Activated B cell treated with CpG ODN at 0.5 μM for 24 hours (primary cell): ENCODE measurements at regions of chr7 and their contacts with region 1.

Region 1: GRCh38 chr7:142782922-142783900 is 12.4 kb downstream of the PRSS2 start:
- DNase-seq: peak; percentile 71
- ATAC-seq: peak; percentile 91
- H3K4me3 Mint-ChIP-seq: peak overlapping the region; percentile 86
- H3K27ac Mint-ChIP-seq: peak overlapping the region; percentile 91
- H3K4me1 Mint-ChIP-seq: peaks cover 34% of the 10 kb centered on the region
- H3K27me3 Mint-ChIP-seq: no peaks in the 10 kb centered on the region
- CTCF ChIP-seq: peak; percentile 27

Region 2: DNA sequence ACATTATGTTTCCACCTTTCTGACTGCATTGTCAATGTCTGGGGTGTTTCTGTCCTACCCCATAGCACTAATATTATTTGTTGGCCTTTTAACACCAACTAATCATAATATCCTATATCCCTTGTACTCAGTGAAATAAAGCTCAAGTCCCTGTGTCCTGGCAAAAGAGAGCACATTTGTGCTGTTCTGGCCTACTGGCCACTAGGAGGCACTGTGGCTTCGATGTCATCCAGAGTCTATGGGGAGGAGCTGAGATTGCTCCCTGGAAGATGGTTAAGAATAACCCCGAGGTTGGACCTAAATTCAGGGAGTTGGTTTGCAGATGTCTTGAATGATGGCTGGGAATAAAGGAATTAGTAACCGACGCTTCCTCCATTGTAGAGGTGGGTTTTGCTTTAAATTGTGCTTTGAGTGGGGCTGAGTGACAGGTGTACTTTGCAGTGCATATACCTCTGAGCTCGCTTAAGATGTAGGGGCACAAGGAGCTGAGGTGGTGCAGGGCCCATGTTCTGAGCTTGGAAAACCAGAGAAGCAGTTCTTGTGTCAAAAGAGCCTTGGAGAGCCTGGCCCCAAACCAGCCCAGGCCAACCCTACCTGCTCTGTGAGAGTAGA is 225.1 kb before region 1 on chr7:
- CTCF ChIA-PET with region 1: no interaction called
- POLR2A ChIA-PET with region 1: no interaction called
- intact Hi-C with region 1: no loop called
- DNase-seq: no peak
- ATAC-seq: peak; percentile 42
- H3K4me3 Mint-ChIP-seq: no peak overlapping the region
- H3K27ac Mint-ChIP-seq: no peak overlapping the region
- H3K4me1 Mint-ChIP-seq: no peaks in the 10 kb centered on the region
- H3K27me3 Mint-ChIP-seq: peaks cover 58% of the 10 kb centered on the region
- CTCF ChIP-seq: peak; percentile 48

Region 3: GRCh38 chr7:142626420-142627035 is 156.7 kb before region 1 on chr7:
- CTCF ChIA-PET with region 1: interaction called, 95 read pairs
- POLR2A ChIA-PET with region 1: interaction called, 4 read pairs
- intact Hi-C with region 1: no loop called
- DNase-seq: no peak
- ATAC-seq: peak; percentile 62
- H3K4me3 Mint-ChIP-seq: no peak overlapping the region
- H3K27ac Mint-ChIP-seq: no peak overlapping the region
- H3K4me1 Mint-ChIP-seq: peaks cover 3% of the 10 kb centered on the region
- H3K27me3 Mint-ChIP-seq: peaks cover 24% of the 10 kb centered on the region
- CTCF ChIP-seq: no peak

Region 4: DNA sequence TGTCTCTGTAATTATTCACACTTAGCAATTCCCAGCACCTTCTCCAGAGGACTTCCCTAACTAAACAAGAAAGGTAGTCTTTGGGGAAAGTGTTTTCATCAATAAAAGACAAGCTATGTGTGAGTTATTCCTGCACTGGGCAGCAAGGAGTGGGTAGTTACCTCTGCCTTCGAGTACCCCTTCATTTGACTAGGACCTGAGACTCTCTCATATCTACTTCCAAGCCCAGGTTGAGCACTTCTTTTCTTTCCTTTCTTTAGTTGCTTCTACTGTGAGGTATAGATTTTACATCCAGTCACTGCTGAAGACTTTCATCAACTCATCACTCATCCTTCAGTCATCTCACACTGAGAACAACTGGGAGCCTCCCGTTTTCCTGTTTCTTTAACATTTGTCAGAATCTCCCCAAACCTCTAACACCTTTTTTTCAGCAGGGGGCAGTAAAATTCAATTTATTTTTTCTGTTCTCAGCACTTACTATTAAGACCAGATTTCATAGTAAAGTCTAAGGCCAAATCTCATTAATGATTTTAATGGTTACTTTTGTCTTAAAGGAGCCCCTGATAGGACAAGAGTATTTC is 114.0 kb before region 1 on chr7:
- CTCF ChIA-PET with region 1: interaction called, 14 read pairs
- POLR2A ChIA-PET with region 1: interaction called, 10 read pairs
- intact Hi-C with region 1: loop called (anchors 1 kb)
- DNase-seq: no peak
- ATAC-seq: peak; percentile 28
- H3K4me3 Mint-ChIP-seq: peak overlapping the region; percentile 13
- H3K27ac Mint-ChIP-seq: no peak overlapping the region
- H3K4me1 Mint-ChIP-seq: peaks cover 30% of the 10 kb centered on the region
- H3K27me3 Mint-ChIP-seq: no peaks in the 10 kb centered on the region
- CTCF ChIP-seq: no peak

Region 5: DNA sequence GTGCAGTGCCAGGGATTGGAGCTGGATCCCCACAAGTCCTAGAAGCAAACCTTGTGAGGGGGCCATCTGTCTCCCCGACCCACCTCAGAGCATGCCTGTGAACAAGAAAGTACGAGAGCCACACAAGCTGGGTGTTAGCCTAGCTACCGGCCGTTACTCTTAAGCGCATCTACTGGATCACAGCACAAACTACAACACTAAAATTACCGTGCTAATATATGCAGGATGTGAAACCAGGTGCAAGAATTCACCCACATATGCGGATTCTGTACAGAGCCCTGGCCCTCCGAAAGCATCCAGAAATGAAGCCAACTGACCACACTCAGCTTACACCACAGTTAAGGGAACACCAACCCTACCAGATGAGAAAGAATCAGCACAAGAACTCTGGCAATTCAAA is 49.9 kb before region 1 on chr7:
- CTCF ChIA-PET with region 1: interaction called, 11 read pairs
- POLR2A ChIA-PET with region 1: no interaction called
- intact Hi-C with region 1: no loop called
- DNase-seq: no peak
- ATAC-seq: no peak
- H3K4me3 Mint-ChIP-seq: peak overlapping the region; percentile 24
- H3K27ac Mint-ChIP-seq: no peak overlapping the region
- H3K4me1 Mint-ChIP-seq: peaks cover 10% of the 10 kb centered on the region
- H3K27me3 Mint-ChIP-seq: no peaks in the 10 kb centered on the region
- CTCF ChIP-seq: no peak

Region 6: DNA sequence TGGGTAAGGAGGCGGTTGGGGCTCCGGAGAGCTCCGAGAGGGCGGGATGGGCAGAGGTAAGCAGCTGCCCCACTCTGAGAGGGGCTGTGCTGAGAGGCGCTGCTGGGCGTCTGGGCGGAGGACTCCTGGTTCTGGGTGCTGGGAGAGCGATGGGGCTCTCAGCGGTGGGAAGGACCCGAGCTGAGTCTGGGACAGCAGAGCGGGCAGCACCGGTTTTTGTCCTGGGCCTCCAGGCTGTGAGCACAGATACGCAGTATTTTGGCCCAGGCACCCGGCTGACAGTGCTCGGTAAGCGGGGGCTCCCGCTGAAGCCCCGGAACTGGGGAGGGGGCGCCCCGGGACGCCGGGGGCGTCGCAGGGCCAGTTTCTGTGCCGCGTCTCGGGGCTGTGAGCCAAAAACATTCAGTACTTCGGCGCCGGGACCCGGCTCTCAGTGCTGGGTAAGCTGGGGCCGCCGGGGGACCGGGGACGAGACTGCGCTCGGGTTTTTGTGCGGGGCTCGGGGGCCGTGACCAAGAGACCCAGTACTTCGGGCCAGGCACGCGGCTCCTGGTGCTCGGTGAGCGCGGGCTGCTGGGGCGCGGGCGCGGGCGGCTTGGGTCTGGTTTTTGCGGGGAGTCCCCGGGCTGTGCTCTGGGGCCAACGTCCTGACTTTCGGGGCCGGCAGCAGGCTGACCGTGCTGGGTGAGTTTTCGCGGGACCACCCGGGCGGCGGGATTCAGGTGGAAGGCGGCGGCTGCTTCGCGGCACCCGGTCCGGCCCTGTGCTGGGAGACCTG is 13.6 kb after region 1 on chr7:
- CTCF ChIA-PET with region 1: interaction called, 109 read pairs
- POLR2A ChIA-PET with region 1: interaction called, 325 read pairs
- intact Hi-C with region 1: loop called (anchors 1 kb)
- DNase-seq: peak; percentile 47
- ATAC-seq: peak; percentile 44
- H3K4me3 Mint-ChIP-seq: peak overlapping the region; percentile 97
- H3K27ac Mint-ChIP-seq: peak overlapping the region; percentile 99
- H3K4me1 Mint-ChIP-seq: peaks cover 83% of the 10 kb centered on the region
- H3K27me3 Mint-ChIP-seq: no peaks in the 10 kb centered on the region
- CTCF ChIP-seq: no peak

Region 7: DNA sequence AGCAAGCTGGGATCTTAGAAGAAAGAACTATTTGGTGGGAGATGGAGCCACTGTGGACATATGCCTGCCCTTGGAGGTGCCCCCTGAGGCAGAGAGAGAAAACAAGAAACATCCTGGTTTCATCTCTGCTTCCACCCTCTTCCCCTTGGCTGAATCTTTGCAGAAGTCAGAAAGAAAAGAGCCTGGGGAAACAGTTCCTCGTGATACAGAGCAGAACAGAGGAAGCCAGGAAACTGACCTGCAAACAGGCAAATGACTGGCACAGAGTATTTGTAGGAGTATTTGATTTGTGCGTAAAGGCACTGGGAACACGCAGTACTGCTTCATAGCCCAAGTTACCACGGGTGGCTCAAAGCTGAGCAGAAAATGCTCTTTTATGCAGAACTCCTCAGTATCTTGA is 186.0 kb after region 1 on chr7:
- CTCF ChIA-PET with region 1: no interaction called
- POLR2A ChIA-PET with region 1: no interaction called
- intact Hi-C with region 1: no loop called
- DNase-seq: no peak
- ATAC-seq: no peak
- H3K4me3 Mint-ChIP-seq: no peak overlapping the region
- H3K27ac Mint-ChIP-seq: no peak overlapping the region
- H3K4me1 Mint-ChIP-seq: no peaks in the 10 kb centered on the region
- H3K27me3 Mint-ChIP-seq: peaks cover 16% of the 10 kb centered on the region
- CTCF ChIP-seq: no peak

Region 8: DNA sequence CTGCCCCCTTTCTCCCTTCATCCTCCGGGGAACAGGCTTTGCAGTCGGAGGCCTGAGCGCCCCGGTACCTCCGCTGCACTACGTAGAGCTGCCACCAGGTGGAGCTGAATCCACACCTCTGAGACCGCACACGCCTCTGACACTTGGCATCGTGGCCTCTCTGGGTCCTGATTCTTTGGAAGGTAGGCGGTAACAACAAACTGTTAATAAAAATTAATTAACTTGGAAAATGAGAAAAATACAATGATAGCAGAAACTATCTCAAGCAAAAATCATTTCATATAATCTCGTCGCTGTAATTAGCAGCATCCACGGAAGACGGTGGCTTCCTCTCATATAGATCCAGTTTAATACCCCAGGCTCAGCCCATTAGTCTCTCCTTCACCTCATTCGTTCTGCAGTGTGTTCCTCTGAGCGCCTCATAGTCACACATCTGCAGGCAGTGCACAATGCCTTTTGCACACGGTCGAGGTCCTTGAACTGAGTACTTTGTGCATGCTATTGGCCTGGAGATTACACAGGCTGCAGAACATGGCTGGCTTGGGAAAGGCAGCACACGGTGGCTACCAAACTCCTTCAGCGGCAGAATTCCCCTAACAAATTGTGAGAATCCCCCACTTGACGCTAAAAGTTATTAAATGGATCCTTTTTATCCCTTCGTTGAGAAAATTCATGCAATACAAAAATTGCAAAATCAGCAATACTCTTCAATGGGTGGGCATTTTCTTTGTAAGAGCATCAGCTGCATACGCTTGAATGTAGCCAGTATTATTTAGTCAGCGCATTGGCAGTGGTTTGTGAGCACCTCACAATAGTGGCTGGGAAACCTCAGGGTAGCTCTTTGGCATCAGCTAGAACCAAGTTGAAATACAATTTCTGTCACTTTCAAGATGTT is 225.0 kb after region 1 on chr7:
- CTCF ChIA-PET with region 1: interaction called, 6 read pairs
- POLR2A ChIA-PET with region 1: interaction called, 5 read pairs
- intact Hi-C with region 1: loop called (anchors 1 kb)
- DNase-seq: peak; percentile 81
- ATAC-seq: peak; percentile 97
- H3K4me3 Mint-ChIP-seq: no peak overlapping the region
- H3K27ac Mint-ChIP-seq: no peak overlapping the region
- H3K4me1 Mint-ChIP-seq: peaks cover 50% of the 10 kb centered on the region
- H3K27me3 Mint-ChIP-seq: peaks cover 1% of the 10 kb centered on the region
- CTCF ChIP-seq: peak; percentile 98

Region 9: GRCh38 chr7:143027683-143028082 is 244.5 kb after region 1 on chr7:
- CTCF ChIA-PET with region 1: no interaction called
- POLR2A ChIA-PET with region 1: no interaction called
- intact Hi-C with region 1: no loop called
- DNase-seq: no peak
- ATAC-seq: no peak
- H3K4me3 Mint-ChIP-seq: no peak overlapping the region
- H3K27ac Mint-ChIP-seq: no peak overlapping the region
- H3K4me1 Mint-ChIP-seq: peaks cover 8% of the 10 kb centered on the region
- H3K27me3 Mint-ChIP-seq: no peaks in the 10 kb centered on the region
- CTCF ChIP-seq: no peak

Region 10: DNA sequence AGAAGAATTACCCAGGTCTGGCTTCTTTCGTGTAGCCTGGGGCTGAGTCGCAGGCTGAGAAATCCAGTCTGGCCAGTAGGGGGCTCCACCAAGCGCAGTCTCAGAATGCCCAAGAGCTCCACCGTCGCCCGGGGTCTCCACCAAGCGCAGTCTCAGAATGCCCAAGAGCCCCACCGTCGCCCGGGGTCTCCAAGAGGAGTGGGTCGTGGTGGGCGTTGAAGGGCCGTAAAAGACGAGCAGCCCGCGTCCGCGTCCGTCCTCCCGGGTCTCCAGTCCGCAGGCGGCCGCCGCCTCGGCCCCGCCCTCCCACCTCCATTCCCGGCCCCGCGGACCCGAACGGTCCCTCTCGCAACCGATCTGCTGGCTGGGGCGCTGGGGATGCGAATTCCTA is 597.0 kb after region 1 on chr7:
- CTCF ChIA-PET with region 1: no interaction called
- POLR2A ChIA-PET with region 1: no interaction called
- intact Hi-C with region 1: no loop called
- DNase-seq: peak; percentile 82
- ATAC-seq: peak; percentile 50
- H3K4me3 Mint-ChIP-seq: peak overlapping the region; percentile 86
- H3K27ac Mint-ChIP-seq: peak overlapping the region; percentile 85
- H3K4me1 Mint-ChIP-seq: peaks cover 32% of the 10 kb centered on the region
- H3K27me3 Mint-ChIP-seq: no peaks in the 10 kb centered on the region
- CTCF ChIP-seq: peak; percentile 73